GM12878 (cell line): ENCODE measurements at regions of chr12 and their contacts with region 1.

Region 1: DNA sequence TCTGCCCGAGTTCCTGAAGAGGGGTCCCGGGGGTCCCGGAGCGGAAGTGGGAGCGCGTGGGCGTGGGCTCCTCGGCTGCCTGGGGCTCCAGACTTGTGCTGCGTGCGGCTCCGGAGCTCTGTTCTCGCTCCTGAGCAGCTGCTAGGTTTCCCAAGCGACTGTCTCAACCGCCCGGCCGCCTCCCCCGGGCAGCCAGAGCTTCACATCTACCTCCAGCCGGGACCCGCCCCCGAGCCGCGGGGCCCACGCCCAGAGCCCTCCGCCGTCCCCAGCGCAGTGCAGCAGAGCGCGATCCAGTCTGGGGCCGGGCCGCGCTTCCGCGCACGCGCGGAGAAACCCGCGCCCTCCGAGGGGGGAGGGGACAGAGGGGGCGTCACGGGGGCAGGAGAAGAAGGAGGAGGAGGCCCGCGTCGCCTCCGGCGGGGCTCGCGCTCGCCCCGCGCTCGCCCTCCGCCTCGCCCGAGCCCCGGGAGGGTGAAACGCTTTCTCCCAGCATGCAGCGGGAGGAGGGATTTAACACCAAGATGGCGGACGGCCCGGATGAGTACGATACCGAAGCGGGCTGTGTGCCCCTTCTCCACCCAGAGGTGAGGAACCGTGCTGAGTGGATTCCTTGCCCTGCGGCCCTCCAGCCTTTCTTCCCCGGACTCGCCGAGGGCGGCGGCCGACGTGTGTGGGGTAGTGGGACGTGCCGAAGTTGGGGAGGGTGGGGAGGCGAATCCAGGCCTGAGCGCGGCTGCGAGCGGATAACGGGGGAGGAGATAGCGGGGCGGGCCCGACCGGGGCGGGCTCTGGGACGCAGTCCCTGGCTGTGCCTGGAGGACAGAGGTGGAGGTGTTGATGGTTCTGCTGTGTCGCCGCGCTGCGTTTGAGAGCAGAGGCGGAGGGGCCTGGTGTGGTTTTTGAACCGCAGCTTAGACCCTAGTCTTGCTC is at the start of gene ZDHHC17:
- DNase-seq: peak; percentile 66
- ATAC-seq: peak; percentile 93
- H3K4me3 ChIP-seq: peak within 1 kb of the TSS; percentile 85
- H3K27ac ChIP-seq: peak within 1 kb of the TSS; percentile 89
- H3K4me1 ChIP-seq: peaks cover 8% of the 10 kb centered on the region
- H3K27me3 ChIP-seq: no peaks in the 10 kb centered on the region
- CTCF ChIP-seq: no peak
- EP300 ChIP-seq: no peak
- POLR2A ChIP-seq: peak; percentile 98
- RAD21 ChIP-seq: no peak
- polyA plus RNA-seq, gene ZDHHC17: 4.3 to 4.9 TPM

Region 2: GRCh38 chr12:75366629-75367028 is 1397.4 kb before region 1 on chr12:
- CTCF ChIA-PET with region 1: no interaction called
- POLR2A ChIA-PET with region 1: interaction called, 10 read pairs
- RAD21 ChIA-PET with region 1: no interaction called
- SMC1A ChIA-PET with region 1: no interaction called
- in situ Hi-C with region 1: no loop called
- intact Hi-C with region 1: no loop called
- DNase-seq: no peak
- ATAC-seq: peak; percentile 54
- H3K4me3 ChIP-seq: no peak overlapping the region
- H3K27ac ChIP-seq: no peak overlapping the region
- H3K4me1 ChIP-seq: no peaks in the 10 kb centered on the region
- H3K27me3 ChIP-seq: no peaks in the 10 kb centered on the region
- CTCF ChIP-seq: no peak
- EP300 ChIP-seq: no peak
- POLR2A ChIP-seq: no peak
- RAD21 ChIP-seq: no peak

Region 3: GRCh38 chr12:76649099-76649498 is 114.9 kb before region 1 on chr12:
- CTCF ChIA-PET with region 1: no interaction called
- POLR2A ChIA-PET with region 1: no interaction called
- RAD21 ChIA-PET with region 1: no interaction called
- SMC1A ChIA-PET with region 1: no interaction called
- in situ Hi-C with region 1: no loop called
- intact Hi-C with region 1: no loop called
- DNase-seq: no peak
- ATAC-seq: no peak
- H3K4me3 ChIP-seq: no peak overlapping the region
- H3K27ac ChIP-seq: no peak overlapping the region
- H3K4me1 ChIP-seq: no peaks in the 10 kb centered on the region
- H3K27me3 ChIP-seq: no peaks in the 10 kb centered on the region
- CTCF ChIP-seq: no peak
- EP300 ChIP-seq: no peak
- POLR2A ChIP-seq: no peak
- RAD21 ChIP-seq: no peak

Region 4: DNA sequence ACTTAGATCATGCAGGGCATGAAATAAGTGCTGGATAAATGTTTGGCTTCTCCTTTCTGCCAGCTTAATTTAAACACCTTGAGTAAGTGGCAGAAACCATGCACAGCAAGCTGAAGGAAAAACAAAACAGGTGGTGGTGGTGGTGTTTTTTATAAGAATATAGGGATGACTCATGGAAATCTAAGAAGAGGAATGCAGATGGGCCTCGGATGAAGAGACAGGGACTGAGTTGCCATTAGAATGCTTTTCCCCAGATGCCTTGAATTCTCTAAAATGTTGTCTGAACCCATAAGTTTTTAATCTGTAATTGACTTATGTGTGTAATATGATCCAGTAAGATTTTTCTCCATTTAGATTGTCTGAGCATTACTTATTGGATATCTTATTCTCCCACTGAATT is 93.2 kb before region 1 on chr12:
- CTCF ChIA-PET with region 1: no interaction called
- POLR2A ChIA-PET with region 1: no interaction called
- RAD21 ChIA-PET with region 1: no interaction called
- SMC1A ChIA-PET with region 1: no interaction called
- in situ Hi-C with region 1: no loop called
- intact Hi-C with region 1: no loop called
- DNase-seq: no peak
- ATAC-seq: no peak
- H3K4me3 ChIP-seq: no peak overlapping the region
- H3K27ac ChIP-seq: no peak overlapping the region
- H3K4me1 ChIP-seq: no peaks in the 10 kb centered on the region
- H3K27me3 ChIP-seq: no peaks in the 10 kb centered on the region
- CTCF ChIP-seq: no peak
- EP300 ChIP-seq: no peak
- POLR2A ChIP-seq: no peak
- RAD21 ChIP-seq: no peak

Region 5: DNA sequence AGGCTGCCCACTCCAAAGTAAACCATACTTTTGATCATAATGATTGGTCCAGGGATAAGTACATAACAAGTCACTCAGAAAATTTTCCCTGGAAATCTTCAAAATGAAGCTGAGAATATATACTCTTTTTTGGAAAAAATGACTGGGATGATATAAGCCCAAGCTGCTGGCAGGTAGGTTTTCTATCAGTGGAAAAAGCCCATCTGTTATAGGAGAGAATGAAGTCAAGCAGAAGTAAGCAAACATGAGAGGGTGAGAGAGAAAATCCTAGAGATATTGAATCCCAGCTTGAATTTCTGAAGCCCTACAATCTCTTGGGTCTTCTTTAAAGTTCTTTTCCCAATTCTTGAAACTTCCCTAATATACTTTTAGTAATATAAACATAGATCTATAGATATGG is 37.4 kb before region 1 on chr12:
- CTCF ChIA-PET with region 1: no interaction called
- POLR2A ChIA-PET with region 1: no interaction called
- RAD21 ChIA-PET with region 1: no interaction called
- SMC1A ChIA-PET with region 1: no interaction called
- in situ Hi-C with region 1: no loop called
- intact Hi-C with region 1: no loop called
- DNase-seq: no peak
- ATAC-seq: no peak
- H3K4me3 ChIP-seq: no peak overlapping the region
- H3K27ac ChIP-seq: no peak overlapping the region
- H3K4me1 ChIP-seq: no peaks in the 10 kb centered on the region
- H3K27me3 ChIP-seq: no peaks in the 10 kb centered on the region
- CTCF ChIP-seq: no peak
- EP300 ChIP-seq: no peak
- POLR2A ChIP-seq: no peak
- RAD21 ChIP-seq: no peak

Region 6: DNA sequence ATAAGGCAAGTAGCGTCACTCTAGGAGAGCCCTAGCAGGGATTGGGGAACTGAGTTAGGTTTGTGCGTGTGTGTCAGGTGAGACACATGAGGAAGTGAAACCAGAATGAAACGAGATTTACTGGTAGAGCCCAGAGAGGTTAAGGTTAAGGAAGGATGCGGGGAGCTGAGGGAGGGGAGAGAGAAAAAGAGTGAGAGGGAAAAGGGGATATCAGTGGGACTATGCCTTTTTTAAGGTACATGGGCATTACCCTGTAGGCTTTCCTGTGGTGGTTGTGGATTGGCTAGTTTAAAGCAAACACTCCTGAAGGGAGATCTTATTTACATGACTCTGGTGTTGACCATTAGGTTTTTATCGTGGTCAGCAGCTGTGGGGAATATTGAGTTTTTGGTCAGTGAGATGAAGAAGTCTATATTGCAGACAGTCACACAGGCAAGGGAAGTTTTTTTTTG is 13.8 kb after region 1 on chr12:
- CTCF ChIA-PET with region 1: interaction called, 8 read pairs
- POLR2A ChIA-PET with region 1: interaction called, 6 read pairs
- RAD21 ChIA-PET with region 1: interaction called, 11 read pairs
- SMC1A ChIA-PET with region 1: interaction called, 63 read pairs
- in situ Hi-C with region 1: no loop called
- intact Hi-C with region 1: loop called (anchors 2 kb)
- DNase-seq: peak; percentile 53
- ATAC-seq: peak; percentile 98
- H3K4me3 ChIP-seq: 0 out of 2 replicates have a peak overlapping the region, but pooled peaks have one; percentile 8
- H3K27ac ChIP-seq: peak overlapping the region; percentile 58
- H3K4me1 ChIP-seq: peaks cover 13% of the 10 kb centered on the region
- H3K27me3 ChIP-seq: no peaks in the 10 kb centered on the region
- CTCF ChIP-seq: no peak
- EP300 ChIP-seq: peak; percentile 29 to 90; a peak in 3 of 4 replicates
- POLR2A ChIP-seq: no peak
- RAD21 ChIP-seq: no peak

Region 7: DNA sequence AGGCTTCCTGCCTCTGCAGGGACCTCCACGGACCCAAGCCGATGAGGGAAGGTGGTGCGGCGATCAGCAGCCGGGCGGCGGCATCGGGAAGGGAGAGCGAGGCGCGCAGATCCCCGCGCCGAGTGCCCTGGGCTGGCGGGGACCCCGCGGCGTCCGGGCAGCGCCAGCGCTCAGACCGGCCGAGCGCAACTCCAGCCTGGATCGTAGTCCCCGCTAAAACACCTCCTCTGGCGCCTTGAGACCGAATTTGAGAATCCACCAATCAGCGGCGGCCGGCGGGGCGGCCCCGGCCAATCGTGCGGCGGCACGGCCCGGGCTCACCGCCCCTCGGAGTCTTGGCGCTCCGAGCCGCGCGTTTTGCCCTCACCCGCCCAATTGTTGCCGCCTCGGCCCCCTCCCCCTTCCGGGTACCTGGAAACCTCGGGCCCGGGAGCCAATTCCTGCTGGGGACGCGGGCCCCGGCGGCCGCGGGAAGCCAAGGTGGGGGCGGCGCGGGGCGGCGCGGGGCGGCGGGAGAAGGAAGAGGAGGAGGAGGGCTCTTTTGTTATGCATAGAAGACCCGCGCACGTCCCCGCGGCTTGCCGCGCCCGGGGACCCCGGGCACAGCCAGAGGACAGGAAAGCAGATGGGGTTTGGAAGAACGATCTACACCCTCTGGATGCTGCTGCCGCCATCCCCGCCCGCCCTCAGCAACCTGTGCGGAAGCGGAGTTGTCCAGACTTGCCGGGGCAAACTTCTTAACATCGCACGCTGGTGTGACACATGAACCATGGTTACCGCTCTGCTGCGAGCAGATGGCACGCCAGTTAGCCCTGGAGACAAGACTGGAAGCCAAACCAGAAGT is 301.6 kb after region 1 on chr12 and contains the start of gene E2F7:
- CTCF ChIA-PET with region 1: no interaction called
- POLR2A ChIA-PET with region 1: no interaction called
- RAD21 ChIA-PET with region 1: no interaction called
- SMC1A ChIA-PET with region 1: no interaction called
- in situ Hi-C with region 1: no loop called
- intact Hi-C with region 1: loop called (anchors 5 kb)
- DNase-seq: peak; percentile 56
- ATAC-seq: peak; percentile 84
- H3K4me3 ChIP-seq: peak within 1 kb of the TSS; percentile 91
- H3K27ac ChIP-seq: peak within 1 kb of the TSS; percentile 79
- H3K4me1 ChIP-seq: peaks cover 23% of the 10 kb centered on the region
- H3K27me3 ChIP-seq: no peaks in the 10 kb centered on the region
- CTCF ChIP-seq: no peak
- EP300 ChIP-seq: no peak
- POLR2A ChIP-seq: peak; percentile 88
- RAD21 ChIP-seq: no peak
- polyA plus RNA-seq, gene E2F7: 5.6 to 7.0 TPM

Region 8: DNA sequence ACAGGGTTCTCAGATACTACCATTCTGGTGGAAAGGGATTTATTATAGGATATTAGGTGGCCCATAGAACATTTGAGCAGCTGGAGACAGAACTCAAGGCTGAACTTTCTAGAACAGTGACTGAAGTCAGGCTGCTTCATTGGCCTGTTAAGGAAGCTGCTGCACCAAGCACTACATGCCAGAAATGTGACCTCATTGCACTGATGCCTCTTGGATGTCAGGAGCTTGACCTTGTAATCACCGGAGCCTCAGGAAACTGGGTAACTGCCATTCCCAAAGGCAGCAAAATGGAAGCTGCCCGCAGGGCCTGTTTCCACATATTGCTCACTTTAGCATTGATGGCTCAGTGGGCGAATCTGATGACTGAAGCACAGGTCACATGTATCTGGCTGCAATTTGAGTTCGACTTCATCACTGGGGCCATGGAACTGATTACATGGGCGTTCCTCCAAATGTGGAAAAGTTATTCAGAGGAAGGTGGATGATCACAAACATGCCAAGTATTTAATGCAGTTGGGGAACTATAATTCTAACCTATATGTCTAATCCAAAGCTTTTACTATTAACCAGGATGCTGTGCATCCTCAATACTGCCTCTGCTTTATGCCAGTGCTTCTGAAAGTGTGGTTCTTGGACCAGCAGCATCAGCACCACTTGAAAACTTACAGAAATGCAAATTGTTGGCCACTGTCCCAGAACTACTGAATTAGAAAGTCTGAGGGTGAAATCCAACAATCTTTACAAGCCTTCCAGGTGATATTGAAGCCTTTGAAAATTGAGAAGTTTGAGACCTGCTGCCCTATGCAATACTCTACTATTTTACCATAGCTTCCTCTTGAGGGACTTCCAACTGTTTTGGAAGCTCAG is 729.5 kb after region 1 on chr12:
- CTCF ChIA-PET with region 1: no interaction called
- POLR2A ChIA-PET with region 1: no interaction called
- RAD21 ChIA-PET with region 1: no interaction called
- SMC1A ChIA-PET with region 1: no interaction called
- in situ Hi-C with region 1: no loop called
- intact Hi-C with region 1: no loop called
- DNase-seq: no peak
- ATAC-seq: no peak
- H3K4me3 ChIP-seq: no peak overlapping the region
- H3K27ac ChIP-seq: no peak overlapping the region
- H3K4me1 ChIP-seq: no peaks in the 10 kb centered on the region
- H3K27me3 ChIP-seq: no peaks in the 10 kb centered on the region
- CTCF ChIP-seq: no peak
- EP300 ChIP-seq: no peak
- POLR2A ChIP-seq: no peak
- RAD21 ChIP-seq: no peak